HepG2 (cell line): ENCODE measurements at regions of chr19 and their contacts with region 1.

Region 1: GRCh38 chr19:1540365-1540925 is 16.6 kb downstream of the PLK5 start:
- DNase-seq: no peak
- ATAC-seq: no peak
- H3K4me3 ChIP-seq: no peak overlapping the region
- H3K27ac ChIP-seq: no peak overlapping the region
- H3K4me1 ChIP-seq: peaks cover 8% of the 10 kb centered on the region
- H3K27me3 ChIP-seq: no peaks in the 10 kb centered on the region
- CTCF ChIP-seq: no peak
- EP300 ChIP-seq: no peak
- POLR2A ChIP-seq: no peak
- RAD21 ChIP-seq: no peak

Region 2: GRCh38 chr19:1343041-1343440 is 197.4 kb before region 1 on chr19:
- CTCF ChIA-PET with region 1: no interaction called
- POLR2A ChIA-PET with region 1: no interaction called
- in situ Hi-C with region 1: no loop called
- intact Hi-C with region 1: no loop called
- DNase-seq: no peak
- ATAC-seq: no peak
- H3K4me3 ChIP-seq: no peak overlapping the region
- H3K27ac ChIP-seq: no peak overlapping the region
- H3K4me1 ChIP-seq: peaks cover 19% of the 10 kb centered on the region; the same call in 1 of the 2 replicates
- H3K27me3 ChIP-seq: peaks cover 3 to 4% of the 10 kb centered on the region in 2 experiments; a peak in 2 of 5 replicates
- CTCF ChIP-seq: no peak
- EP300 ChIP-seq: no peak
- POLR2A ChIP-seq: no peak
- RAD21 ChIP-seq: no peak

Region 3: DNA sequence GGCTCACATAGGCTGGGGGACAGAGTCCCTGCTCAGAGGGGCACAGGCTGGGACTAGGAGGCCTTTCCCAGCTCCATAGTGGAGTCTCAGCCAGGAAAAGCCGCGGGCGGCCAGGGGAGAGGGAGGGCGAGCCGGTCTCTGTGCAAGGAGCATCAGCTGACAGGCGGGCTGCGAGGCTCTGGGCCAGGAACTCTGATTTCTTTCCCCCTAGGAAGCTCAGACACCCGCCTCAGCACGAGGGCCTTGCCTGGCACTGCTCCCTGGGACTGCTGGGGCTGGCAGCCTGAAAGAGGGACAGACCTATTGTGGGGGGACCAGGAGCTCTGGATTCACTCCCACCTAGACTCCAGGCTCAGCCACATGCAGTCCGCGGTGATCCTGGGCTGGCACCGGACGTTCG is 18.8 kb before region 1 on chr19:
- CTCF ChIA-PET with region 1: no interaction called
- POLR2A ChIA-PET with region 1: no interaction called
- in situ Hi-C with region 1: no loop called
- intact Hi-C with region 1: no loop called
- DNase-seq: no peak
- ATAC-seq: peak; percentile 23
- H3K4me3 ChIP-seq: no peak overlapping the region
- H3K27ac ChIP-seq: no peak overlapping the region
- H3K4me1 ChIP-seq: peaks cover 20% of the 10 kb centered on the region
- H3K27me3 ChIP-seq: peaks cover 26 to 62% of the 10 kb centered on the region in 2 experiments
- CTCF ChIP-seq: no peak
- EP300 ChIP-seq: no peak
- POLR2A ChIP-seq: no peak
- RAD21 ChIP-seq: no peak

Region 4: DNA sequence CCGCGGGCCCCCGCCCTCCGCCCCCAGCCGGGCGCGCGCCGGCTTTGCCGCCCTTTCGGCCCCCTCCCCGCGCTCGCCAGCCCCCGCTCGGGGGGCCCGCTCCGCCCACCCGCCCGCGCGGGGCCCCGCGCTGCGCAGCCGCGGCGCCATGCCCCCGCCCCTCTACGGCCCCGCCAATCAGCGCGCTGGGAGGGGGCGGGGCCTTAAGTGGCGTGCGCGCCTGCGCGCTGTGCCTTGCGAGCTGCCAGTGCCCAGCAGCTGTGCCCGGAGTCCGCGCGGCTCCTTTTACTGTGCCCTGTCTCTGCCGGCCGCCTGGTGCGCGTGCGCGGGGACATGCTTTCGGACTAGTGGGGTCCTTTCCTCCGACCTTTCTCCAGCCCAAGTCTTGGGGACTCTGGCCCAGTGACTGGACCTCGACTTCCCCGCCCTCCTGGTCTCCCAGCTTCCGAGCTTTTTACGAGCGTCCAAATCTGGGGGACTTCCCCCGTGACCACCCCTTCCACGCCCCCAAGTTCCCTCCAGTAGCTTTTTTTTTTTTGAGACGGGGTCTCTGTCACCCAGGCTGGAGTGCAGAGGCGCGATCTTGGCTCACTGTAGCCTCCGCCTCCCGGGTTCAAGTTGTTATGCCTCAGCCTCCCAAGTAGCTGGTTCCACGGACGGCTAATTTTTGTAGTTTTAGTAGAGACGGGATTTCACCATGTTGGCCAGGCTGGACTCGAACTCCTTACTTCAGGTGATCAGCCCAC is 52.5 kb after region 1 on chr19 and contains the start of gene MBD3:
- CTCF ChIA-PET with region 1: no interaction called
- POLR2A ChIA-PET with region 1: no interaction called
- in situ Hi-C with region 1: no loop called
- intact Hi-C with region 1: loop called (anchors 10 kb)
- DNase-seq: peak; percentile 81
- ATAC-seq: peak; percentile 69
- H3K4me3 ChIP-seq: peak within 1 kb of the TSS; percentile 72 to 90 (median 83)
- H3K27ac ChIP-seq: peak within 1 kb of the TSS; percentile 99
- H3K4me1 ChIP-seq: peaks cover 41% of the 10 kb centered on the region
- H3K27me3 ChIP-seq: no peaks in the 10 kb centered on the region; a peak in 1 of 5 replicates
- CTCF ChIP-seq: no peak
- EP300 ChIP-seq: peak in 1 of 2 experiments; percentile 69; a peak in 1 of 4 replicates
- POLR2A ChIP-seq: peak in 1 of 2 experiments; percentile 94; a peak in 2 of 4 replicates
- RAD21 ChIP-seq: peak; percentile 22; the same call in 1 of the 2 replicates
- total RNA-seq, gene MBD3: 58.9 and 76.9 TPM in 2 replicates

Region 5: GRCh38 chr19:1767464-1767933 is 227.1 kb after region 1 on chr19:
- CTCF ChIA-PET with region 1: no interaction called
- POLR2A ChIA-PET with region 1: no interaction called
- in situ Hi-C with region 1: no loop called
- intact Hi-C with region 1: loop called (anchors 10 kb)
- DNase-seq: no peak
- ATAC-seq: peak; percentile 70
- H3K4me3 ChIP-seq: no peak overlapping the region
- H3K27ac ChIP-seq: no peak overlapping the region
- H3K4me1 ChIP-seq: no peaks in the 10 kb centered on the region
- H3K27me3 ChIP-seq: peaks cover 11 to 60% of the 10 kb centered on the region in 2 experiments
- CTCF ChIP-seq: peak; percentile 93
- EP300 ChIP-seq: no peak
- POLR2A ChIP-seq: no peak
- RAD21 ChIP-seq: peak; percentile 70